Aorta (tissue), 5 donors: ENCODE measurements at regions of chr19 and their contacts with region 1.

Region 1: GRCh38 chr19:2070436-2070827 is 19.4 kb upstream of the MKNK2 start:
- DNase-seq: no peak
- ATAC-seq: peak; percentile 61
- H3K4me3 ChIP-seq: no peak overlapping the region
- H3K27ac ChIP-seq: no peak overlapping the region
- H3K4me1 ChIP-seq: no peaks in the 10 kb centered on the region
- H3K27me3 ChIP-seq: no peaks in the 10 kb centered on the region

Region 2: DNA sequence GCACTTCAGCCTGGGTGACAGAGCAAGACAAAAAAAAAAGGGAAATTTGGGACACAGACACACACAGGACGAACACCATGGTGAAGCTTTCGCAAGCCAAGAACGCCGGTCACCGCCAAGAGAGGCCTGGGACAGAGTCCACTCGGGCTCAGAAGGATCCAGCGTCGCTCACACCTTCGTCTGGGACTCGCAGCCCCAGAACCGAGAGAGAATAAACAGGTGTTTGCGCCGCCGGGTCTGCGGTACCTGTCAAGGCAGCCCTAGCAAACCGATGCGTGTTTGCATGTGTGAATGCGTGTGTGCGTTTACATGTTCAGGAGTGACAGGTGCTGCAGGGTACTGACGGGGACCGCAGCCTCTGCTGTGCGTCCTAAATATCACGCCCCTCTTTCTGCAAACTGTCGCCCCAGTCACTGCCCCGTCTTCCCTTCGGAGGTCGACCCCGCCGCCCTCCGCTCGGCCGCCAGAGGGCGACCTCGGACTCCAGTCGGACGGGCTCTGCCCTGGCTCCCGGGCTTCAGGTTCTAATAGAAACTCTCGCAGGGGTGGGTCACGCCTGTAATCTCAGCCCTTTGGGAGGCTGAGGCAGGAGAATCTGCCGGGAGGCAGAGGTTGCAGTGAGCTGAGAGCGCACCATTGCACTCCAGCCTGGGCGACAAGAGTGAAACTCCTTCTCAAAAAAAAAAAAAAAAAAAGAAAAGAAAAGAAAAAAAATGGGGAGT is 141.2 kb before region 1 on chr19:
- intact Hi-C with region 1: loop called (anchors 5 to 10 kb)
- DNase-seq: peak; percentile 86 to 93
- ATAC-seq: peak; percentile 92
- H3K4me3 ChIP-seq: no peak overlapping the region
- H3K27ac ChIP-seq: no peak overlapping the region
- H3K4me1 ChIP-seq: no peaks in the 10 kb centered on the region
- H3K27me3 ChIP-seq: no peaks in the 10 kb centered on the region

Region 3: DNA sequence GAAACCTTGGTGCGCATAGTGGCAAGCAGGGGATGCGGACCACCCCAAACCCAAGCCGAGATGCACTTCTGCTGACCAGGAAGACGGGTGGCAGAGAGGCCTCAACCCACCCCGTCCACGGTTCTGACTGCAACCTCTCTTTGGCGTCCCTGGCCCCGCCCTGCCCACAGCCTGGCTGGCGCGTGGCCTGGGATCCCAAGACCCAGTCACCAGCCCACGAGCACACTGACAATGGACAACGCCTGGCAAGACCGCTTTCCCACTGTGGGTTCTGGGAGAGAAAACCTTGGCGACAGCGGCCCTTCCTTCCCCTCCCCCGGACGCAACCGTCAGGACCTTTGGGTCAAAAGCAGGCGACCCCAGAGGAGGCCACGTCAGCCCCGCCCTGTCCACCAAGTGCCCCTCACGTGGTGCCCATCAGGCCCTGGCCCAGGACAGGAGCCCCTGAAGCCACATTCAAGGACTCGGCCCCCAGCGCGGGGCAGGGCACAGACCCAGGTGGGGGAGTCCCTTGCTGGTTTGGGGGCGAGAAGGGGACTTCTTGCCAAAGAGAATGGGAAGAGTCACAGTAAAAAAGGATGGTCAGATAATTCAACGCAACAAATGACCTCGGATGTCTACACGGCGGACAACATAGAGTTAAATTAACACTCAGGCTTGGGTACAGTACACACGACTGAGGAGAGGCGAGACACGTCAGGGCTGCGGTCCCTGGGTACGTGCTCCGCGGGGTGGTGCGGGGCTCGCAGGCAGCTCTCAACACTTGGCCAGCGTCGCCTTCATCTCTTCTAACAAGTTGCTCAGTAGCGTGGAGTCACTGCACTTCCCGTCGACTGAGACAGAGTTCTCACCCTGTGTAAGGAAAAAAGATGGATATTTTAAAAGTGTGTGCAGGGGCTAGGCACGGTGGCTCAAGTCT is 31.2 kb after region 1 on chr19:
- intact Hi-C with region 1: no loop called
- DNase-seq: no peak
- ATAC-seq: no peak
- H3K4me3 ChIP-seq: no peak overlapping the region
- H3K27ac ChIP-seq: no peak overlapping the region
- H3K4me1 ChIP-seq: no peaks in the 10 kb centered on the region
- H3K27me3 ChIP-seq: no peaks in the 10 kb centered on the region

Region 4: DNA sequence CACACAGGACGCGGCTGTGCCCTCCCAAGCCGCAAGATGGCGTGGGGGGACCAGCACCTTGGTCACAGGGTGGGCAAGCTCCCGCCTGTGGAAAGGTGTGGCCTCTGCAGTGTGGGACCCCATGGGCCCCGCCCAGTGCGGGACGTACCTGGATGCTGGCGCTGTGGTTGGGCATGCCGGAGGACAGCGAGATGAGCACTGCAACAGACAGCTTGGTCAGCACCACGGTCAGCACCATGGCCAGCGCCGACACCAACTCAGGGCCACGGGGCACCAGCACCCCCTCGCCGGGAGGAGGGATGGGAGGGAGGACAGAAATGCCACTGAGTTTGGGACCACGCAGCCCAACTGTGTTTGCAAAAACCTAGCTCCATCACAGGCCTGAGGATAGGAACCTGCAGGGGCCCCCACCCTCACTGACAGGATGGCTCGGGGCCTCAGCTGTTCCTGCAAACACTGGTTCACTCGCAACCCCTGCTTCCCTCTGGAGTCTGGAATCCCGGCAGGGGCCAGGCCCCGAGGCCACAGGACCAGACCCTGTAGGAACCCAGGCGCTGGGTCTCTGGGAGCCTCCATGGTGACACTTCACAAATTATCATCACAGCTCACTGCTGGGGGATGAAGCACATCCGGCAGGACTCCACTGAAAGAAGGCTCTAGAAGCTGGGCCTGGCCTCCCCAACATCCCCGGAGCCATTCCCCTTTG is 53.4 kb after region 1 on chr19:
- intact Hi-C with region 1: no loop called
- DNase-seq: peak in 1 of 2 donors; percentile 81
- ATAC-seq: no peak
- H3K4me3 ChIP-seq: no peak overlapping the region
- H3K27ac ChIP-seq: no peak overlapping the region
- H3K4me1 ChIP-seq: no peaks in the 10 kb centered on the region
- H3K27me3 ChIP-seq: no peaks in the 10 kb centered on the region